Aorta (tissue), 5 donors: ENCODE measurements at regions of chr6 and their contacts with region 1.

Region 1: GRCh38 chr6:81814370-81815109 is 62.1 kb upstream of the TENT5A start:
- DNase-seq: no peak
- ATAC-seq: no peak
- H3K4me3 ChIP-seq: no peak overlapping the region
- H3K27ac ChIP-seq: no peak overlapping the region
- H3K4me1 ChIP-seq: peaks cover 0 to 2% of the 10 kb centered on the region in 2 donors
- H3K27me3 ChIP-seq: no peaks in the 10 kb centered on the region

Region 2: DNA sequence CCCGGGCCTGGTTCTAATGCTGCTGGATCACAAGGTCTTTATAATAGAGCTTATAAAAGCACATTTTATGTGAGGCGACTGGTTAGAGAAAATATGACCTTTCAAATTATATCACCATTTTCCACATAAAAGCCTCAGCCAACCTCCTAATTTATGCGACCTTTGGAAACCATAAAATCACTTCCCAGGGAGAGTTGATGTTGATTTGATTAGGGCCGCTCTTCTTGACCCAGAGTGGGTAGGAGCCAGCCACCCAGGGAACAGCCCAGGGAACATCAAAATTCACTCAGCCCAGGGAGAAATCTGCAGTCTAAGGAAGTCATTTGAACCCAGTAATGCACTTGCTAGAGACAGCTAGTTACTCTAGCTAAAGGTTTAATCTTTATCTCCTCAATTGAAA is 17.8 kb after region 1 on chr6:
- intact Hi-C with region 1: loop called in 1 of 2 experiments (anchors 2 kb)
- DNase-seq: no peak
- ATAC-seq: no peak
- H3K4me3 ChIP-seq: no peak overlapping the region
- H3K27ac ChIP-seq: no peak overlapping the region
- H3K4me1 ChIP-seq: no peaks in the 10 kb centered on the region
- H3K27me3 ChIP-seq: no peaks in the 10 kb centered on the region